Right lobe of liver (tissue), 6 donors: ENCODE measurements at regions of chr4 and their contacts with region 1.

Region 1: GRCh38 chr4:108570993-108571569 is 49.3 kb upstream of the RPL34 start:
- DNase-seq: no peak
- ATAC-seq: peak in 1 of 4 donors; percentile 63
- H3K4me3 ChIP-seq: no peak overlapping the region
- H3K27ac ChIP-seq: no peak overlapping the region
- H3K4me1 ChIP-seq: no peaks in the 10 kb centered on the region
- H3K27me3 ChIP-seq: no peaks in the 10 kb centered on the region
- CTCF ChIP-seq: no peak
- POLR2A ChIP-seq: no peak

Region 2: DNA sequence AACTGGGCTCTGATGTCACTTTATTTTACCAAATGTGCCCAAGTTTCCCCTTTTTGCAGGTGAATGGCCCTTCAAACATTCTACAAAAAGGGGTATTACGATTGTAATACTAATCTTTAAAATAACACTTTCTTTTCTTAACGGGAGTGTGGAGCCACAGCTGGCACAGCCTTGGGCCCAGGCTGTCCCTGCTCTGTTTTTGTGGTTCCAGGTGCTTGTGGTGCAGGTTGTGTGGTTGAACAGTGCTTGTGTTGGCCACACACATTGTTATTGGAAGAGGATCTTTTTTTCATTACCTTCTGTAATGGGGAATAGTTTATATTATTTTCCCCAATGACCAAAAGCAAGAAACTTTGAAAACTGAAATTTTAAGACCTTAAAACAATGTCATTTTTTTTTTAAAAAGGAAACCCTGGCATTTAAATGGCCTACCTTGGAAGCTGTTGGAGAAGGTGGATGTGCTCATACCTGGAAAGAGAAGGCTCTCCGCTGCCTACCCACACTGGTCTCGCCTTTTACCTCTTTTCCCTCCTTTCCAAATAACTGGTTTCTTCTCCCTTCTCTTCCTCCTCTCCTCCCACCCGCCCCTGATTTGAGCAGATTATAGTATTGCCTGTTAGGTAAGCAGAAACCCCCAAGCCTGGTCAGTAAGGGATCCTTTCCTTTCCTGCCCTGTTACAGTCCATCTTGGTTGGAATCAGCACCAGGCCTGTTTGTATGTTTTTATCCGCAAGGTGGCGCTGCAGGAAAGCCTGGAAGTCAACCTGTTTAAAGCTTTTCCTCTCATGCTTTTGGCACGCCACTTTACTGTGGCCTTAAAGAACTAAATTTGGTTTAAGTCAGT is 552.8 kb before region 1 on chr4:
- intact Hi-C with region 1: loop called (anchors 5 to 10 kb)
- DNase-seq: peak; percentile 71 to 81 (median 72)
- ATAC-seq: peak; percentile 89 to 96 (median 92)
- H3K4me3 ChIP-seq: no peak overlapping the region
- H3K27ac ChIP-seq: no peak overlapping the region
- H3K4me1 ChIP-seq: no peaks in the 10 kb centered on the region
- H3K27me3 ChIP-seq: no peaks in the 10 kb centered on the region
- CTCF ChIP-seq: peak; percentile 76 to 89 (median 83)
- POLR2A ChIP-seq: no peak

Region 3: DNA sequence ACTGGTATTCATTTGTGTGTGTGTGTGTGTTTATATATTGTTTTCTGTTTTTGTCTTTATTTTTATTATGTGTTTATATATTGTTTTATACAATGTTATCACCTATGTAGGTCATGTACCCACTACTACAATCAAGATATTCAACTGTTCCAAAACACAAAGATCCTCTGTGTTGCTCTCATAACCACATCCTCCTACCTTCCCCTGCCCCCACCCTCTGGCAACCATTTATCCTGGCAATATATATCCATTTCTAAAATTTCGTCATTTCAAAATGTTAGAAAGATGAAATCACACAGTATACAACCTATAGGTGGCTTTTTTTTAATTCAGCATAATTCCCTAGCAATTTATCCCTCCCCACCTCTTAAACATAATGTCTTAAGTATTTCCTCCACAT is 30.5 kb after region 1 on chr4:
- intact Hi-C with region 1: no loop called
- DNase-seq: no peak
- ATAC-seq: no peak
- H3K4me3 ChIP-seq: no peak overlapping the region
- H3K27ac ChIP-seq: no peak overlapping the region
- H3K4me1 ChIP-seq: no peaks in the 10 kb centered on the region
- H3K27me3 ChIP-seq: no peaks in the 10 kb centered on the region
- CTCF ChIP-seq: no peak
- POLR2A ChIP-seq: no peak